Tibial artery (tissue), 4 donors: ENCODE measurements at regions of chr17 and their contacts with region 1.

Region 1: DNA sequence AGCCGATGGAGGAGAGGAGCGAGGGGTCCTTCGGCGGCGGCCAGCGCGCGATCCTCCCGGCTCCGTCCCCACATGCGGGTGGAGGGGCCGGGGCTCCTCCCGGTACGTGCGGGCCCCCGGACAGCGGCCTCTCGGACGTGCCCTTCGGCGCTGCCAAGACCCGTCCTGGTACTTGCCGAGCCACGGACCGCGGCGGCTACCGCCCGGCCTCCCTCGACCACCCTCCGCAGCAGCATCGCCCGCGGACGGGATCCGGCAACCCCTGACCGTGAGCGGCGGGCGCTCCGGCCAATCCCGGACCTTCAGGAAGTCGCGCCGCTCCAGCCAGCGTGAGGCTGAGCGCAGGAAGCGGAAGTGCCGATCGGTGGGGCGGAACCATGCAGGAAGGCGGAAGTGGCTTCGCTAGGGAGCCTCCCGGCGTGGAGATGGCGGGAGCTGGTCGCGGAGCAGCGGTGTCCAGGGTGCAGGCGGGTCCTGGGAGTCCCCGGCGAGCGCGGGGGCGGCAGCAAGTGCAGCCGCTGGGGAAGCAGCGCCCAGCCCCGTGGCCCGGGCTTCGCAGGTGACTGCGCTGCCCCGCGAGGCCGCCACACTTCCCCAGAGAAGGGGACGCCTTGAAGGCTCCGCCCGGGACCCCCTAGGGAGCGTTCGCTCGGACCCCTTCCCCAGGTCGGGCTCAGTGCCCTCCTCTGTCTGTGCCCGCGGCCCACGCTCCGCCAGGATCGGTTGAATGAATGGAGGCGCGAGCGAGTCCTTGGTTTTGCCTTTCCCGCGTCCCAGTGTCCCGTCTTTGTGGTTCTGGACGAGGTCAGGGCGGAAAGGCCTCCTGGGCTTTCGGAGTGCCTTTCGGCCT is at the starts of genes CCDC137 and OXLD1:
- DNase-seq: peak; percentile 94 to 97
- H3K4me3 ChIP-seq: peak within 1 kb of the TSS; percentile 87 to 95
- H3K27ac ChIP-seq: peak within 1 kb of the TSS; percentile 86 to 92
- H3K4me1 ChIP-seq: peaks cover 0 to 30% (median 23%) of the 10 kb centered on the region in 4 donors
- H3K27me3 ChIP-seq: no peaks in the 10 kb centered on the region
- CTCF ChIP-seq: no peak

Region 2: DNA sequence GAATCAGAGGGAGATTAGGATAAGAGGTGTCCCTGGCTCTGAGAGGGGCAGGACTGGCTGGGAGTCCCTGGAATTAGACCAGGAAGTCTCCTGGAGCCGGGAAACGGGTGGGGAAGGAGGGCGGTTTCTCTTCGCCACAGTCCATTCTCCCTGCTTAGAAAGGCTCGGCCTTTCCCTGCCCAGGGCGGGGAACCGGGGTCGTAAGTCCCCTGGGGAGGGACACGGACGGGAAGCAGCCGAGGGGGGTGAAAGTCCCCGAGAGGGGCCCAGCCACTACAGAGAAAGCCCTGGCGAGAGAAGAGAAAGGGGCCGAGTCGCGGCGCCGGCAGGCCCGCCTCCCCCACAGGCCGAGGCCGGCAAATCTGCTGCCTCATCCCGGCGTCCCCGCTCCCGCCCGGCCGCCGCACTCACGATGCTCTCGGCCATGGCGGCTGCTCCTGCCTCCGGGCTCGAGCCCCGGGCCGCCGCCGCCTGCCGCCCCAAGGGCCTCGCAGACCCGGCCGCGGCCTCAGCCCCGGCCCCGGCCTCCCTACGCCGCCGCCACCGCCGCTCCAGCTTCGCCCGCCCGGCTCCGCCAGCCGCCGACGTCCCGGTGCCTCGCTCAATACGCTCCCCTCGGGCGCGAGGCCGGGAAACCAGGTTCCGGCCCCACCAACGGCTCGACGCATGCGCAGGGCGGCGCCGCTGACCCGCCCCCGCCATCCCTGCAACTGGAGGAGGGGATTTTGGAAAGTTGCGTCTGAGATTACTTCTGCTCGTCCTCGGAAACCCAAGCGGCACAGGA is 29.9 kb before region 1 on chr17 and contains the starts of genes NPLOC4 and TSPAN10:
- intact Hi-C with region 1: loop called (anchors 2 kb)
- DNase-seq: peak; percentile 78 to 91
- H3K4me3 ChIP-seq: peak within 1 kb of the TSS; percentile 79 to 89
- H3K27ac ChIP-seq: peak within 1 kb of the TSS; percentile 86 to 87
- H3K4me1 ChIP-seq: peaks cover 0 to 41% (median 28%) of the 10 kb centered on the region in 4 donors
- H3K27me3 ChIP-seq: no peaks in the 10 kb centered on the region
- CTCF ChIP-seq: no peak

Region 3: GRCh38 chr17:81722184-81723120 is 55.9 kb after region 1 on chr17:
- intact Hi-C with region 1: no loop called
- DNase-seq: no peak
- H3K4me3 ChIP-seq: no peak overlapping the region
- H3K27ac ChIP-seq: no peak overlapping the region
- H3K4me1 ChIP-seq: peaks cover 0 to 14% (median 8%) of the 10 kb centered on the region in 4 donors
- H3K27me3 ChIP-seq: peaks cover 0 to 26% of the 10 kb centered on the region in 2 donors
- CTCF ChIP-seq: no peak